ENCODE measurements at regions of chr7 and their contacts with region 1.

Region 1: DNA sequence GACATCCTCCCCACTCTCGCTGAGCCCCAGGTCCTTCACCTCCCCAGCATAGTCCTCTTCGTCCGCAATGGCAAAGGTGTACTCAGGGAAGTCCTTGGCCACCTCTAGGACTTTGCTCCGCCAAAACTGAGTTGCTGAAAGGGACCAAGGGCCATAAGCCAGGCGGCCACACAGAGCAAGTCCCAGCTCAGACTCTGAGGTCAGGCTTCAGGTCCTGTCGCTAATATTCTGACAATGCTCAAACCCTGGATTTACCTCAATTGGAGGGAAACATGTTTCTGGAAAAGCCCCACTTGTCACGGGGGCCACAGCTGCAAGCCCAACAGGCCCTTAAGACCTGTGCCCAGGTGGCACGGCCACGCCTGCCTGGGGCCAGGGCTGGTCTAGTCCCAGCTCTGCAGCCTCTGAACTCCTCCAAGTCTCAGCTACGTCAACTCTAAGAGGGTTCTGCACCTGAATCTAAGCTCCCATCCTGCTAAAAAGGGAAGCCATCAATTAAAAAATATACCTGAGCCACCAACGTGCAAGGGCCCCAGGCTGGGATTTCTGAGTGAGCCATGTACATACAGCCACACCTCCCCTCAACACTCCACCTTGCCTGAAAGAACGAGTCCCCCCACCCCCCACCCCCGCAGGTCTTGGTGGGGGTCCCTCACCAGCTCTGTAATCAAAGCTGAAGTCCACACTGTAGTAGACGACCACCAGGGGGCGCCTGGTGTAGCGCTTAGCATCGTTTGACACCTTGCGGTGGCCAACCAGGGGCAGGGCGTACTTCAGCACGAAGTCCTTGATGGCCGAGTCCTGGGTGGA is 22.9 kb downstream of the PDIA4 start:
- DNase-seq: peak; percentile 81
- H3K4me3 Mint-ChIP-seq: no peak overlapping the region
- H3K27ac Mint-ChIP-seq: peak overlapping the region; percentile 64
- H3K4me1 Mint-ChIP-seq: peaks cover 6% of the 10 kb centered on the region
- H3K27me3 Mint-ChIP-seq: no peaks in the 10 kb centered on the region

Region 2: DNA sequence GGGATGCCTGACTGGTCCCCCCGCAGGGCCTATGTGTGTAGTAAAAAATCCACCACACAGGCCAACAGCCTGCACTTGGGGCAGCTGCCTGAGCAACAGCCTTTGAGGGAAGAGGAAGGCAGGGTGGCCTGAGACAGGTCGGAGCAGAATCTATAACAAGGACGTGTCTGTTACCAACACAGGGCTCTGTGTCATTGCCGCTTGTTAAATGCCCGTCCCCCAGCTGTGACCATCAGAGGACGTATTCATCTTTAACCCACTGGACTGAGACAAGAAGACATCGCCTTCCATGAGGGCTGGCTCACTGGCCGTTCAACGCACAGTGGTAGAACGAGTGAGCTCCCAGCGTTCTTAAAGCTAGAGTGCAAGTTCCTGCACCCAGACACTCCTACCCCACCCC is 15.0 kb after region 1 on chr7:
- CTCF ChIA-PET with region 1: interaction called, 14 read pairs
- POLR2A ChIA-PET with region 1: no interaction called
- DNase-seq: no peak
- H3K4me3 Mint-ChIP-seq: no peak overlapping the region
- H3K27ac Mint-ChIP-seq: no peak overlapping the region
- H3K4me1 Mint-ChIP-seq: peaks cover 26% of the 10 kb centered on the region
- H3K27me3 Mint-ChIP-seq: no peaks in the 10 kb centered on the region

Region 3: DNA sequence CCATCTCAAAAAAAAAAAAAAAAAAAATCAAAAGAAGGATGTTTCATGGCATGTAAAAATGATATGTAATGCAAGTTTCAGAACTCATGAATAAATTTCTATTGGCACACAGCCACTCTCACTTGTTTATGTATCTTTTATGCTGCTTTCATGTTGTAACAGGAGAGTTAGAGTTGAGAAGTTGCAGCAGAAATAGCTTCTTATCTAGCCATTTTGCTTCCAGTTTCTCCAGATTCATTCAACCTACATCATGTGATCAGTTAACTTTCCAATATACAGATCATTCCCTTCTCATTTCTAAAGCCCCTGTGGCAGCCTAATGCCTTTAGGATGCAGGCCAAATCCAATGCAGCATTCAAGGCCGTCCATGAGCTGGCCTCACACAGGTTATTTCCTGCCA is 54.7 kb after region 1 on chr7:
- CTCF ChIA-PET with region 1: interaction called, 72 read pairs
- POLR2A ChIA-PET with region 1: interaction called, 10 read pairs
- DNase-seq: no peak
- H3K4me3 Mint-ChIP-seq: no peak overlapping the region
- H3K27ac Mint-ChIP-seq: no peak overlapping the region
- H3K4me1 Mint-ChIP-seq: peaks cover 10% of the 10 kb centered on the region
- H3K27me3 Mint-ChIP-seq: no peaks in the 10 kb centered on the region

Region 4: DNA sequence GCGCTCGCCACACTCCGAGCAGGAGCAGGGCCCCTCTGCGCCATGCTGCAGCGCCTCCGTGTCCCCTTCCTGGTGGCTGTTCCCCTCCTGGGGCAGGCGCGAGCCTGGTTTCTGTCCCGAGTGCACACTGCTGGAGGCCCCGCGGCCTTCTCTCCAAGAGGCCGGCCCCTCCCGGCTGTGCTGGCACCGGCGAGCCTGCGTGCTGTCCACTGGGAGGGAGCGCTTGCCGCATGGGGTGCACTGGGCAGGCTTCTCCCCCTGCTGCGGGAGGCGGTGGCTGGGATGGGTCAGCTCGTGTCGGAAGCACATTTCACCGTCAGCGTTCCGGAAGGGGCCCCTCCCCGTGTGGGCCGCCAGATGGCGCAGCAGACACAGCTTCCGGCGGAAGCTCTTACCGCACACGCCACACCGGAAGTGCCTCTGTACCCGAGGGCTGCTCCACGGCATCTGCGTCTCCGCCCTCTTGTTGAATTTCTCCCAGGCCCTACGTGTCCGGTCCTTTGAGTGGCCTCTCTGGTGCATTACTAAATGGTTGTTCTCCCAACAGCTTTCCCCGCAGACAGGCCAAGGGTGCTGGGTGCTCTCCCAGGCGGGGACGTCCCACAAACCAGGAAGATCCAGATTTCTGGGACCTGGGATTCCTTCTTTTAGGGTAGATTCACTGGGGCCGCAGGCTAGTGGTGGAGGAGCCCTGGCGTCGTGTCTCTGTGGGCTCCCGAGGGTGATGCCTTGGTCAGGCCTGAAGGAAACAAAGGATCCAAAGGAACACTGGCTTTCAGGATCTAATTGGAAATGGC is 66.4 kb after region 1 on chr7:
- CTCF ChIA-PET with region 1: interaction called, 72 read pairs
- POLR2A ChIA-PET with region 1: no interaction called
- DNase-seq: peak; percentile 53
- H3K4me3 Mint-ChIP-seq: no peak overlapping the region
- H3K27ac Mint-ChIP-seq: no peak overlapping the region
- H3K4me1 Mint-ChIP-seq: peaks cover 8% of the 10 kb centered on the region
- H3K27me3 Mint-ChIP-seq: no peaks in the 10 kb centered on the region

Region 5: DNA sequence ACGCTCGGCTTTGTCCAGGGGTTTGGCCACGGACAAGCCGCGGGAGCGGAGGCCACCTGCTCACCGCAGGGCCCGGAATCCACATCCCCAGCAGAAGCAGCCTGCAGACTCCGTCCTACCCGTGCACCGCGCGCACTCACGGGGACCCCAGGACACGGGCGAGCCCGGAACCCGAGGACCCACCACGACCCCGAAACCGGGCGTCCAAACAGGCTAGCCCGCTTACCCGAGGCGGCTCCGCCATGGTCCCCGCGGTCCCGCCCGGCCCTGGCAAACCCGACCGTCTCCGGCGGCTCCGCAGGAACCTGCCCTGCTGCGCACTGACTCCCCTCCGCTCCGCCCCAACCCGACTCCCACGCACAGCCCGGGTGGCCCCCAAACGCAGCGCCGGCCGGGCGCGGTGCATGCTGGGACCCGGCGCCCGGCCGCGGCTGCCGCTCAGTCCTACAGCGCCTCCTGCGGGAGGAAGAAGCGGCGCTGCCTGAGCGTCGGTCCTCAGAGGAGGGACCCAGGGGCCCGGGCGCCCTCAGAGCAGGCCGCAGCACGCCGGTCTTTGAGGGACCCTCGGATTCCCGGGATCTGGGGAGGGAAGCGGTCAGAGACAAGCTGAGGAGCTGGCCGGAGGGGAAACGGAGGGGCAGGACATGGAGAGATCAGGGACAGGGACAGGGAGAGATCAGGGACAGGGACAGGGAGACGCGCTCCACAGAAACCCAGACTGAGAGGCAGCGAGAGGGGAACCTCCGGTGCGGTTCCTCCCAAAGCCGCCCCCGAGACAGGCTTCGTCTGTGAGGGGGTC is 85.2 kb after region 1 on chr7 and contains the start of gene ZNF786:
- CTCF ChIA-PET with region 1: interaction called, 10 read pairs
- POLR2A ChIA-PET with region 1: no interaction called
- DNase-seq: peak; percentile 90
- H3K4me3 Mint-ChIP-seq: peak within 1 kb of the TSS; percentile 97
- H3K27ac Mint-ChIP-seq: peak within 1 kb of the TSS; percentile 98
- H3K4me1 Mint-ChIP-seq: peaks cover 20% of the 10 kb centered on the region
- H3K27me3 Mint-ChIP-seq: no peaks in the 10 kb centered on the region
- total RNA-seq, gene ZNF786: 6.0 to 7.0 TPM

Region 6: DNA sequence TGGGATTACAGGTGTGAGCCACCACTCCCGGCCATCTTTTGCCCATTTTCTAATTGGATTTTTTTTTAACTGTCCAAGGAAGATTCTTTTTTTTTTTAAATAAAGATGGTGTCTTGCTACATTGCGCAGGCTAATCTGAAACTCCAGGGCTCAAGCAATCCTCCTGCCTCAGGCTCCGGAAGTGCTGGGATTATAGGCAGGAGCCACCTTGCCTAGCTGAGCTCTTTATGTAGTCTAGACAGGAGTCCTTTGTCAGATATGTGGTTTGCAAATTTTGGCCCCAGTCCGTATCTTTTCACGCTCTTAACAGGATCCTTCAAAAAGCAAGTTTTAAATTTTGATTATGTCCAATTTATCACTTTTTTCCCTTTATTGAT is 116.7 kb after region 1 on chr7:
- CTCF ChIA-PET with region 1: no interaction called
- POLR2A ChIA-PET with region 1: no interaction called
- DNase-seq: no peak
- H3K4me3 Mint-ChIP-seq: no peak overlapping the region
- H3K27ac Mint-ChIP-seq: no peak overlapping the region
- H3K4me1 Mint-ChIP-seq: peaks cover 13% of the 10 kb centered on the region
- H3K27me3 Mint-ChIP-seq: no peaks in the 10 kb centered on the region

Measured in activated CD4-positive, alpha-beta memory T cell treated with anti-CD3 and anti-CD28 coated beads, Interleukin-2, amount 10 ng/mL, durations not matched to agents 7 days and 5 days (primary cell).